Spleen (tissue), 13 donors: ENCODE measurements at regions of chr11 and their contacts with region 1.

Region 1: DNA sequence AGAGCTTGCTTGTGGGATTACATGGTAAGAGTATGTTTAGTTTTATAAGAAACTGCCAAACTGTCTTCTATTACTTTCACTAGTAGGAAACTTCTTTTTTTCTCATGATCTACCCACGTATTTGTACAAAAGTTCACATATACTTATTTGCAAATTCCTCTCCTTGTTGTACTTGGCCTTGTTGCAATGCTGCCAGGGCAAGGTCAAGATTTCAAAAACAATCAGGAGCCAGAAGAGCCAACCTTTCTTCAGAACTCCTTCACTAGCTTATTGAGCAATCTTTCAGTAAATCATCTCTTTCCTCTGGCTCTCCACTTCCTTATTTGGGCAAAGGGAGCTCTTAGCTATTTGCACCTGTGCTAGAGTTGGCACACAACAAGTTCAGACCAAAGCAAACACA is 9.7 kb downstream of the SRSF8 start:
- DNase-seq: no peak
- H3K4me3 ChIP-seq: no peak overlapping the region
- H3K27ac ChIP-seq: peak overlapping the region in 5 of 8 donors; percentile 61 to 81 (median 79)
- H3K4me1 ChIP-seq: peaks cover 0 to 53% (median 27%) of the 10 kb centered on the region in 6 donors
- H3K27me3 ChIP-seq: no peaks in the 10 kb centered on the region
- CTCF ChIP-seq: no peak
- POLR2A ChIP-seq: no peak

Region 2: DNA sequence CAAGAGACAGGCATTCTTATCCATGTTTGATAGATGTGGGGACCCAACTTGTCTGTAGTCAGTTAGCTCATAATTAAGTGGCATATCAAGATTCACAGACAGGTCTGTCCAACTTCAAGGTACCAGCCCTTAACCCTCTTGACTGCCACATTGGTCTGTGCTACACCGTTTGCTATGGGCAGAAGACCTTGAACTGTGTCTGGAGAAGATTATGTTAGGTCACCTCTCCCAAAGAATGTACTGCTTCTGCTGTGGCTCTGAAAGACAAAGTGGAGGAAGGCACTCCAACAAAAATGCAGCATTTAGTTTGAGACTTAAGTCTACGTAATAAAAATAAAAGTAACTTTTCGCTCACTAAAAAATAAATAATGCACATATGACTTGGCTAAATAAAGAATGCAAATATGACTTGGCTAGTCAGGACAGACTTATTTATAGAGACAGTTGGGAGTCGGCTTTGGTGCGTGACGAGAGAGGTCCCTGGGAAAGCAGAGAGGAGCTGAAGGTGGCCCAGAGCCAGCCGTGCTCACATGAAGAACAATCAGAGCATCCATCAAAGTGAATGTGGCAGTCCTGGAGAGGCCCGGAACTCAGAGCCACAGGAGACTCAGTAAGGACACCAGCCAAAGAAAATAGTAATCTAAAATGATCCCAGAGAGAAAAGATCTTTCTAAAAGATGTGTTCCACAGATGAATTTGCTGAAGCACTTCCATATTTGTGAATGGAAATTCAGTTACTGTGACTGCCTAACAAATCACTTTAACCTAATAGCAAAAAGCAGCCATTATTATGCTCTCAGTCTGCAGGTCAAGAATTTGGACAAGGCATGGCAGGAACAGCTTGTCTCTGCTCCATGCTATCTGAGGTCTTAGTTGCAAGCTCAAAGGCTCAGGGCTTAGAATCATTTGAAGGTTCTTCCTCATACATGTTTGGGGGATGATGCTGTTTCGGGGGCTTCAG is 138.0 kb before region 1 on chr11:
- intact Hi-C with region 1: no loop called
- DNase-seq: no peak
- H3K4me3 ChIP-seq: no peak overlapping the region
- H3K27ac ChIP-seq: peak overlapping the region in 7 of 8 donors; percentile 21 to 67 (median 41)
- H3K4me1 ChIP-seq: peaks cover 6 to 22% (median 16%) of the 10 kb centered on the region in 6 donors
- H3K27me3 ChIP-seq: peaks cover 0 to 4% (median 0%) of the 10 kb centered on the region in 7 donors
- CTCF ChIP-seq: no peak
- POLR2A ChIP-seq: no peak

Region 3: DNA sequence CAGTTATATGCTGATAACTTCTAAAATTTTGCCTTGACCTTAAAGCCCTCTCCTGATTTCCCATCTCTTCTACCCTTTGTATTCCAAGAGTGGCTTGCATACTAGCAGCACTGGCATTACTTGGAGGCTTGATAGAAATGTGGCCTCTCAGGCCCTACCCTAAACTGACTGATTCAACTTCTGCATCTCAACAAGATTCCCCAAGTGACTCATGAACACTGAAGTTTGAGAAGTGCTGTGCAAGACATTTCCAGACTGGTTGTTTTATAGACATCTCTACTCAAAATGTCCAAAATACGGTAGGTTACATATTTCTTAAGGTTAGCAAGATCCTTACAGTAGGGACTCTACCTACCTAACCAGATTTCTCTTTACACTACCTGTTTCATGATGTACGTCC is 106.0 kb after region 1 on chr11:
- intact Hi-C with region 1: no loop called
- DNase-seq: no peak
- H3K4me3 ChIP-seq: no peak overlapping the region
- H3K27ac ChIP-seq: no peak overlapping the region
- H3K4me1 ChIP-seq: no peaks in the 10 kb centered on the region
- H3K27me3 ChIP-seq: no peaks in the 10 kb centered on the region
- CTCF ChIP-seq: no peak
- POLR2A ChIP-seq: no peak

Region 4: GRCh38 chr11:95616256-95616804 is 539.9 kb after region 1 on chr11:
- intact Hi-C with region 1: no loop called
- DNase-seq: no peak
- H3K4me3 ChIP-seq: no peak overlapping the region
- H3K27ac ChIP-seq: no peak overlapping the region
- H3K4me1 ChIP-seq: no peaks in the 10 kb centered on the region
- H3K27me3 ChIP-seq: no peaks in the 10 kb centered on the region
- CTCF ChIP-seq: no peak
- POLR2A ChIP-seq: no peak

Region 5: GRCh38 chr11:95764267-95764898 is 688.0 kb after region 1 on chr11:
- intact Hi-C with region 1: loop called (anchors 10 kb)
- DNase-seq: no peak
- H3K4me3 ChIP-seq: no peak overlapping the region
- H3K27ac ChIP-seq: no peak overlapping the region
- H3K4me1 ChIP-seq: peaks cover 0 to 25% (median 6%) of the 10 kb centered on the region in 6 donors
- H3K27me3 ChIP-seq: no peaks in the 10 kb centered on the region
- CTCF ChIP-seq: peak; percentile 56 to 80 (median 76)
- POLR2A ChIP-seq: no peak